ENCODE measurements at regions of chr12 and their contacts with region 1.

Region 1: DNA sequence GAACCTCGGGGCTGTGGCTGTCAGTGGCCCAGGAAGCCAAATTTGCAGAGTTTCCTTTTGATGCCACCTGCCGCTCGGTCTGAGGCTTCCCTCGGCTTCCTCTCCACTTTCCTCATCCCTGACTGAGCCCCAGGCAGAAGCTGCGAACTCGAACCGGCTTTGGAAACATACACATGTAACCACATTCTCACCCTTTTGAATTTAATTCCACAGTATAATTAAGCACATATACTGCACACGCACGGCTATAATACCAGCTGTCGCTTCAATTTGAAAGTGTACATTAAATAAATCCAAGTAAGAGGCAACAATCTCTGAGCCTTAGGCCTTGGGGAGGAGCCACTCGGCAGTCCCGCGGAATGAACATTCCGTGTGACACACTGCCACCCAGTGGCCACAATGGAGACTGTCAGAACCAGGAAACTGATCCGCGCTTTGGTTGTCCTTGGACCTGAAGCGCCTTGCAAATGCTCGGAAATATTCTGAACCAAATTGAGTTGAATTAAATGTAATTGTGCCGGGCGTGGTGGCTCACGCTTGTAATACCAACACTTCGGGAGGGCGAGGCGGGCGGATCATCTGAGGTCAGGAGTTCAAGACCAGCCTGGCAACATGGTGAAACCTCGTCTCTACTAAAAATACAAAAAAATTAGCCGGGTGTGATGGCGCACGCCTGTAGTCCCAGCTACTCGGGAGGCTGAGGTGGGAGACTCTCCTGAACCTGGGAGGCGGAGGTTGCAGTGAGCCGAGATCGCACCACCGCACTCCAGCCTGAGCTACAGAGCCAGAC is 117.9 kb upstream of the TMPO start:
- DNase-seq: peak; percentile 88
- H3K4me3 ChIP-seq: peak overlapping the region in 3 of 4 donors; percentile 24 to 47 (median 25)
- H3K27ac ChIP-seq: no peak overlapping the region
- H3K4me1 ChIP-seq: peaks cover 0 to 8% (median 4%) of the 10 kb centered on the region in 4 donors
- H3K27me3 ChIP-seq: no peaks in the 10 kb centered on the region
- CTCF ChIP-seq: peak; percentile 86 to 91 (median 89)
- EP300 ChIP-seq: no peak
- POLR2A ChIP-seq: no peak

Region 2: GRCh38 chr12:96571101-96571862 is 1826.2 kb before region 1 on chr12:
- in situ Hi-C with region 1: loop called in 1 of 4 experiments (anchors 25 kb)
- intact Hi-C with region 1: no loop called
- DNase-seq: no peak
- H3K4me3 ChIP-seq: no peak overlapping the region
- H3K27ac ChIP-seq: no peak overlapping the region
- H3K4me1 ChIP-seq: no peaks in the 10 kb centered on the region
- H3K27me3 ChIP-seq: no peaks in the 10 kb centered on the region
- CTCF ChIP-seq: no peak
- EP300 ChIP-seq: no peak
- POLR2A ChIP-seq: no peak

Region 3: GRCh38 chr12:97148941-97149559 is 1248.5 kb before region 1 on chr12:
- in situ Hi-C with region 1: loop called in 2 of 4 experiments (anchors 25 kb)
- intact Hi-C with region 1: no loop called
- DNase-seq: peak; percentile 47
- H3K4me3 ChIP-seq: no peak overlapping the region
- H3K27ac ChIP-seq: no peak overlapping the region
- H3K4me1 ChIP-seq: no peaks in the 10 kb centered on the region
- H3K27me3 ChIP-seq: no peaks in the 10 kb centered on the region
- CTCF ChIP-seq: peak; percentile 34 to 49 (median 44)
- EP300 ChIP-seq: no peak
- POLR2A ChIP-seq: no peak

Region 4: DNA sequence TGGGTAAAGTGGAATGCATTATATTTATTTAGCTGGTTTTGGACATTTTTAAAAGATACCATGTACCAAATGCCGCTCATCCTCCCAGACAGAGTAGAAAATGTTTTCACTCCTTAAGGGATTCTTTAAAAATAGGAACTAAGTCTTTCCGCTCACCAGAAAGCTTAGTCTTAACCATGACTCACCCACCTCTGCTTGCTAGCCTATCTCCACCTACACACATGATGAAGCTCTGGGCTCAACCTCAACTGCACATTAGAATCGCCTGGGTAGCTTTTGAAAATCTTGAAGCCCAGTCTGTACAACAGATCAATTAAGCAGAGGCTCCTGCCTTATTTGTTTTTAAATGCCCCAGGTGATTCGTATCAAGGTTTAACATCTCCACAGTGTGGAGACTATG is 1229.9 kb before region 1 on chr12:
- in situ Hi-C with region 1: loop called in 1 of 4 experiments (anchors 25 kb)
- intact Hi-C with region 1: no loop called
- DNase-seq: no peak
- H3K4me3 ChIP-seq: no peak overlapping the region
- H3K27ac ChIP-seq: no peak overlapping the region
- H3K4me1 ChIP-seq: no peaks in the 10 kb centered on the region
- H3K27me3 ChIP-seq: no peaks in the 10 kb centered on the region
- CTCF ChIP-seq: no peak
- EP300 ChIP-seq: no peak
- POLR2A ChIP-seq: no peak

Region 5: GRCh38 chr12:98470469-98471082 is 73.1 kb after region 1 on chr12:
- in situ Hi-C with region 1: no loop called
- intact Hi-C with region 1: no loop called
- DNase-seq: no peak
- H3K4me3 ChIP-seq: no peak overlapping the region
- H3K27ac ChIP-seq: no peak overlapping the region
- H3K4me1 ChIP-seq: no peaks in the 10 kb centered on the region
- H3K27me3 ChIP-seq: no peaks in the 10 kb centered on the region
- CTCF ChIP-seq: no peak
- EP300 ChIP-seq: no peak
- POLR2A ChIP-seq: no peak